Calu3 (cell line): ENCODE measurements at regions of chr20 and their contacts with region 1.

Region 1: GRCh38 chr20:45362804-45363610 is at the start of gene SYS1:
- DNase-seq: peak; percentile 100
- H3K4me3 Mint-ChIP-seq: peak within 1 kb of the TSS; percentile 91
- H3K27ac Mint-ChIP-seq: peak within 1 kb of the TSS; percentile 92
- H3K4me1 Mint-ChIP-seq: peaks cover 59% of the 10 kb centered on the region
- H3K27me3 Mint-ChIP-seq: no peaks in the 10 kb centered on the region
- CTCF ChIP-seq: peak; percentile 94
- total RNA-seq, gene SYS1: 42.1 and 45.5 TPM in 2 replicates

Region 2: DNA sequence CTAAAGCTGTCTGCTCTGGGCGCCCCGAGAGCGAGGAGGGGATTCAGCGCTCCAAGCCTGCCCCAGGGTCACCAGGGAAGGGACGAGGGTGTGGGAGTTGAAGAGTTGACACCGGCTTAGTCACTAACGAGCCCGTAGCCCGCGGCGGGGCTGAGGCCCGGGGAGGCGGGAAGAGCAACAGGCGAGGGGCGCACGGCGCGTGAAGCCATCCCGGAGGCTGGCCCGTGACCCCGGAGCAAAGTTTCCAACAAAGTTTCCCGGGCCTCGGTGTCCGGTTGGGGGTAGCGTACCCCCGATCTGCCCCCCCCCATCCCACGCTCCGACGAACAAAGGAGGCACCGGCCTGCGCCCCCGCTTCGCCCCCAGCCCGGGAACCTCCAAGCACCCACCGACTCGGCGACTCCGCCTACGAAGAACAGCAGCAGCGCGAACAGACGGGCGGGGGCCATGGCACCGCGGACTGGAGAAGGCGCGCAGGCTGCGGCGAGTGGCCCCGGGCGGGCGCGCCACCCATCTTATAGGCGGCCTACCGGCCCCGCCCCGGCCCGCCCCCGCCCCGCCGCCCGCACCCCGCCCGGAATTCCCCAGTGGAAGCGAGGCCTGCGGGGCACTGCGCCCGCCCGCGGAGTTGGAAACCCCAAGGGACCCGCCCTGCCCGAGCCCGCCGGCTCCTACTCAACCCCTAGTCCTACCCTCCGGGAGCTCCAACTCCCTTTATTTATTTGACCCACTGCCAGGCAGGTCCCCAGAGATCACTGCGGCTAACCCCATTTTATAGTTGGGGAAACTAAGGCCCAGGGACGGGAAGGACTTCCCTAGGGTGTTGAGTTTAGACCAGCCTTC is 14.8 kb before region 1 on chr20 and contains the start of gene SDC4:
- CTCF ChIA-PET with region 1: interaction called, 57 read pairs
- intact Hi-C with region 1: loop called (anchors 2 kb)
- DNase-seq: peak; percentile 89
- H3K4me3 Mint-ChIP-seq: peak within 1 kb of the TSS; percentile 95
- H3K27ac Mint-ChIP-seq: peak within 1 kb of the TSS; percentile 99
- H3K4me1 Mint-ChIP-seq: peaks cover 30% of the 10 kb centered on the region
- H3K27me3 Mint-ChIP-seq: no peaks in the 10 kb centered on the region
- CTCF ChIP-seq: no peak
- total RNA-seq, gene SDC4: 238 and 256 TPM in 2 replicates

Region 3: DNA sequence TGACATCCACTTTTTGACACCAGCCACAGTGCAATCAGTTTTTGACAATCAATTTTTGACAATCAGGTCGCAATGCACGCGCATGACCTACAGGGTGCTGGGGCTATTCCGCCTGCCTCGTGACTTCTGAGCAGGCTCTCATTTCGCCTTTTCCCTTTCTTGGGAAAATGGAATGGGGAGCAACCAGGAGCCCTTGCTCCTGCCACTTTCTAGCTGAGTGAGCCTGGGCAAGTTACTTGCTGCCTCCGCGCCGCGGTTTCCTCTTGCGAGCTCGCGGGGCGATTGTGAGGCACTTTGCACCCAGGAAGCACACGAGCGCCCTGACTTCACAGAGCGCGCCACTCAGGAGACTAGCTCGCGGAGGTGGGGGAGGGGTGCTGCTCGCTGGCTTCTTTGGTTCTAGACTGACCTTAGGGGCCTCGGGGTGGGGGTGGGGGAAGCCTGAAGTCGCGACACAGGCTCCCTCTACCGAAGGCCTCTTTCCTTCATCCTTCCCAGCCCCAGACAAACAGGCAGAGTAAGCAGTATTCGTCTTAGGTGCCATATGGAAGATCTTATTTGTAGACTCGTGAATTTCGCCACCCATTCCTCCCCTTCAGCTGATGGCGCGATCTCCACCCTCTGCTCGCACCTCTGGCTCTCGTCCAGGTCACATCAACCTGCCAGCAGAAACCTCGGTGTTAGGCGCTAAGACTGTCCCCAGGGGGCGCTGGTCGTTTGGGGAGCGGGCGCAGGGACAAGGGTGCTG is 10.5 kb after region 1 on chr20:
- CTCF ChIA-PET with region 1: interaction called, 24 read pairs
- intact Hi-C with region 1: no loop called
- DNase-seq: peak; percentile 98
- H3K4me3 Mint-ChIP-seq: peak overlapping the region; percentile 84
- H3K27ac Mint-ChIP-seq: peak overlapping the region; percentile 70
- H3K4me1 Mint-ChIP-seq: no peaks in the 10 kb centered on the region
- H3K27me3 Mint-ChIP-seq: no peaks in the 10 kb centered on the region
- CTCF ChIP-seq: peak; percentile 94

Region 4: GRCh38 chr20:45415774-45416637 is 53.0 kb after region 1 on chr20 and contains the start of gene PIGT:
- CTCF ChIA-PET with region 1: interaction called, 8 read pairs
- intact Hi-C with region 1: loop called (anchors 2 kb)
- DNase-seq: peak; percentile 91
- H3K4me3 Mint-ChIP-seq: peak within 1 kb of the TSS; percentile 92
- H3K27ac Mint-ChIP-seq: peak within 1 kb of the TSS; percentile 80
- H3K4me1 Mint-ChIP-seq: peaks cover 24% of the 10 kb centered on the region
- H3K27me3 Mint-ChIP-seq: no peaks in the 10 kb centered on the region
- CTCF ChIP-seq: no peak
- total RNA-seq, gene PIGT: 192 and 193 TPM in 2 replicates